Mammary epithelial cell (primary cell): ENCODE measurements at regions of chr11 and their contacts with region 1.

Region 1: GRCh38 chr11:4626207-4627099 is 10.8 kb upstream of the OR51D1 start:
- DNase-seq: peak; percentile 63
- H3K4me3 ChIP-seq: no peak overlapping the region
- H3K27ac ChIP-seq: no peak overlapping the region
- H3K4me1 ChIP-seq: no peaks in the 10 kb centered on the region
- H3K27me3 ChIP-seq: no peaks in the 10 kb centered on the region
- CTCF ChIP-seq: peak; percentile 70 to 79

Region 2: GRCh38 chr11:4826425-4826824 is 200.0 kb after region 1 on chr11:
- CTCF ChIA-PET with region 1: no interaction called
- dilution Hi-C with region 1: no loop called
- in situ Hi-C with region 1: no loop called
- intact Hi-C with region 1: loop called (anchors 2 kb)
- DNase-seq: no peak
- H3K4me3 ChIP-seq: no peak overlapping the region
- H3K27ac ChIP-seq: no peak overlapping the region
- H3K4me1 ChIP-seq: no peaks in the 10 kb centered on the region
- H3K27me3 ChIP-seq: no peaks in the 10 kb centered on the region
- CTCF ChIP-seq: peak in 1 of 2 donors; percentile 60

Region 3: GRCh38 chr11:5004424-5005274 is 378.2 kb after region 1 on chr11:
- CTCF ChIA-PET with region 1: no interaction called
- dilution Hi-C with region 1: no loop called
- in situ Hi-C with region 1: loop called in 1 of 2 experiments (anchors 10 kb)
- intact Hi-C with region 1: loop called (anchors 1 kb)
- DNase-seq: peak; percentile 63
- H3K4me3 ChIP-seq: no peak overlapping the region
- H3K27ac ChIP-seq: peak overlapping the region; percentile 42
- H3K4me1 ChIP-seq: peaks cover 6% of the 10 kb centered on the region
- H3K27me3 ChIP-seq: no peaks in the 10 kb centered on the region
- CTCF ChIP-seq: peak; percentile 57 to 73

Region 4: DNA sequence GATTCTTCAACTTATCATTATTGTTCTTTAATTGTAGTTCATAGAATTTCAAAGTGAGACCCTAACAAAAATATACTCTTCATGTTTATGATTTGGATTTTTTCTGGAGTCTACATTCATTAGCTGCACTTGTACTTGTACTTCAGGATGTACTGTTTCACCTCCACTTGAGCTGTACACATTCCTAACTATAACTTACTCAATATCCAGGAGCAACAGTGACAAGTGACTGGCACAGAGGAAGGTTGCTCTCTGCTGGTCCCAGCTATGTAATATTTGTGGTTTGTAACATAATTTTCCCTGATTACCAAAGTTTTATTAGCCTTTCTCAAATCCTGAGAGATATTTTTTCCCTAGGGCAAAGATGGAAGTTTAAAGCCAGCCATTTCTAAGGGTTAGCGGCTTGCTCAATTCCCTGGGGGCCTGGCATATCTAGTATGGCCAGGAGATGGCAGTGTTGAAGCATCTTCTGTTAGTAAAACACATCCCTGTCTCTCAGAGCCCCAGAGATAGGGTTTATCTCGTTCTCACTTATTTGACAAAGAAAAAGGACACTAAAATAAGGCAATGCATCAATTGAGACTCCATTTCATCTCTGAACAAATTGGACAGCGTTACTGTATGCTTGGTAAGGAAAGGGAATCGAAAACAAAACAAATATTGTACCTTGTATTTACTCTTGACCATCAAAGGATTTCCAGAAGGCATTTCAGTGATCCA is 497.5 kb after region 1 on chr11:
- CTCF ChIA-PET with region 1: no interaction called
- dilution Hi-C with region 1: no loop called
- in situ Hi-C with region 1: no loop called
- intact Hi-C with region 1: loop called (anchors 5 kb)
- DNase-seq: peak; percentile 51
- H3K4me3 ChIP-seq: no peak overlapping the region
- H3K27ac ChIP-seq: no peak overlapping the region
- H3K4me1 ChIP-seq: no peaks in the 10 kb centered on the region
- H3K27me3 ChIP-seq: no peaks in the 10 kb centered on the region
- CTCF ChIP-seq: peak; percentile 76 to 88

Region 5: DNA sequence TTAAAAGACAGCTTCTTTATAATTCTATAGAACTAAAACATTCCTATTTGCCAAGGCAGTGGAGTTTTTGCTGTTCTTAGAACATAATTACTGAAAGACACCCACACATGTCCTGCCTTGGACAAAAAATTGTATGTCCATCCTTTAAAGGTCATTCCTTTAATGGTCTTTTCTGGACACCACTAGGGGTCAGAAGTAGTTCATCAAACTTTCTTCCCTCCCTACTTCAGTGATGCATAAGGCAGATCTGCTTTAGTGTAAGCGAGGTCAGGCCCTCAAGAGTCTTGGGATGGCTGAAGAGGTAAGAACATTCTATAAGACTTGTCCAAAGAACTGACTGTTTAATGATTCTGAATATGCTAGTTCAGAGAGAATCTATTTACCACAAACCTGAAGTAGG is 578.3 kb after region 1 on chr11:
- CTCF ChIA-PET with region 1: no interaction called
- dilution Hi-C with region 1: no loop called
- in situ Hi-C with region 1: no loop called
- intact Hi-C with region 1: loop called (anchors 10 kb)
- DNase-seq: peak; percentile 58
- H3K4me3 ChIP-seq: no peak overlapping the region
- H3K27ac ChIP-seq: no peak overlapping the region
- H3K4me1 ChIP-seq: no peaks in the 10 kb centered on the region
- H3K27me3 ChIP-seq: no peaks in the 10 kb centered on the region
- CTCF ChIP-seq: peak; percentile 66 to 67

Region 6: GRCh38 chr11:5291207-5291838 is 664.9 kb after region 1 on chr11:
- CTCF ChIA-PET with region 1: no interaction called
- dilution Hi-C with region 1: no loop called
- in situ Hi-C with region 1: no loop called
- intact Hi-C with region 1: loop called (anchors 5 kb)
- DNase-seq: peak; percentile 45
- H3K4me3 ChIP-seq: no peak overlapping the region
- H3K27ac ChIP-seq: no peak overlapping the region
- H3K4me1 ChIP-seq: peaks cover 14% of the 10 kb centered on the region
- H3K27me3 ChIP-seq: no peaks in the 10 kb centered on the region
- CTCF ChIP-seq: peak; percentile 87 to 90

Region 7: DNA sequence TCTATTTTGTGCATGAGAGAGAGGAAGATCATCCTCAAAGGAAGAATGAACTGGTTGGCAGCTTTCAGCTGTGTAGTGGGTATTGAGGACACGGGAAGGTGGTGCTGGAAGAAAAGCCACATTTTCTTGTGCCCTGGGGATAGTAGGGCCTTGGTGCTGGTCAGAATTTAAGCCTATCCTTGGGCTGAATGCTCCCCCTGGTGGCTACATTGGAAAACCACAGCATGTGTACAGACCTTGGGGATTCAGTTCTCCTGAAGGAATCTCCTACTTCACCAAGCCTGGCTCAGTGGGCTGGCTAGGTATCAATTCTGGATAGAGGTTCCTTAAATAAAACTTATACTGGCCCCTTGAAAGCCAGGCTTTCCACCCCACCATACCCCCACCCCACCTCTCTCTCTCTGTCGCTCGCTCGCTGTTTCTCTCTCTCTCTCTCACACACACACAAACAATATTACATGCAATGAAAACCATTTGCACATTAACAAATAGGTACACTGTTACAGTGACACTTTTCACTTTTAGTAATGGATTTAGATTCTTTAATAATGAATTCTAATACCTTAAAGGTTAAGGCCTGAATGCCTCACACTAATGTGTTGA is 754.4 kb after region 1 on chr11:
- CTCF ChIA-PET with region 1: no interaction called
- dilution Hi-C with region 1: no loop called
- in situ Hi-C with region 1: no loop called
- intact Hi-C with region 1: loop called (anchors 1 kb)
- DNase-seq: peak; percentile 35
- H3K4me3 ChIP-seq: no peak overlapping the region
- H3K27ac ChIP-seq: no peak overlapping the region
- H3K4me1 ChIP-seq: no peaks in the 10 kb centered on the region
- H3K27me3 ChIP-seq: no peaks in the 10 kb centered on the region
- CTCF ChIP-seq: peak; percentile 78 to 88